PC-3 (cell line): ENCODE measurements at regions of chr6 and their contacts with region 1.

Region 1: DNA sequence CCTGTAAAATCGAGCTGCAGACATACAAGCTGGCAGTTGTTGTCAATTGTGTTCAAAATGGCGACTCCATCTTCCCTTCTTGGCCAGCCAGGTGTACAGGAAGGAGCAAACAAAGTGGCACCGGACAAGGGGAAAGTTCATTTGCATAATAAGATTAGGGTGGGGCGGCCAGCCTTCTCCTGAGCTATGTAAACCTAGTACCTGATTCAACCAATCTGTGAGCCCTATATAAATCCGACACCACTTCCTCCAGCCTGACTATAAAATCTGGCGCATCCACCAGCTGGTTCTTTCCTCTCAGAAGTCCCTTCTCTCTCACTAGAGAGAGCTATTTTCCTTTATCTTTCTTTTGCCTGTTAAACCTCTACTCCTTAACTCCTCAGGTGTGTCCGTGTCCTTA is 8.1 kb upstream of the HBS1L start:
- DNase-seq: peak; percentile 77
- ATAC-seq: peak; percentile 91
- H3K4me3 ChIP-seq: no peak overlapping the region
- H3K27ac ChIP-seq: no peak overlapping the region
- H3K4me1 ChIP-seq: peaks cover 14% of the 10 kb centered on the region; the same call in 1 of the 2 replicates
- H3K27me3 ChIP-seq: no peaks in the 10 kb centered on the region
- CTCF ChIP-seq: peak; percentile 49

Region 2: GRCh38 chr6:135183532-135184440 is 121.1 kb after region 1 on chr6:
- CTCF ChIA-PET with region 1: interaction called, 11 read pairs
- POLR2A ChIA-PET with region 1: no interaction called
- intact Hi-C with region 1: no loop called
- DNase-seq: peak; percentile 77
- ATAC-seq: peak; percentile 51
- H3K4me3 ChIP-seq: peak overlapping the region; percentile 78
- H3K27ac ChIP-seq: no peak overlapping the region
- H3K4me1 ChIP-seq: no peaks in the 10 kb centered on the region
- H3K27me3 ChIP-seq: no peaks in the 10 kb centered on the region
- CTCF ChIP-seq: peak; percentile 73

Region 3: DNA sequence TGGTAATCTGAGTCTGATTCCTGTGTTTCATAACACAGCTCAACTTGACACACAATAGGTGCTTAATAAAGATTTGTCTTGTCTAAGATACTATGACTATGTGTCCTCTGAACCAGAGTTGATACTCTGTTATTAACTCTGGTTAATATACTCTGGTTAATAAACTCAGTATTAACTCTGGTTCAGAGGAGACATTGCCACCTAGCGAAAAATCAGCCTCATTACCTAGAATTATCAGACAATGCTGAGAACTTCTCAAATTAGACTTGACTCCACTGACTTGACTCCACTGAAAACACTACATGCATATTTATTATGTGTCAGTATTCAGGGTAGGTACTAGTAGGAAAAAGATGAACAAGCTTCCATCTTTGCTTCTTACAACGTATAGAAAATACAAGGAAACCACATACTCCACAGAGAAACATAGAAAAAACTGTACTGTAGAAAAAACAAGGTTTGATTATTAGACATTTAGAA is 361.0 kb after region 1 on chr6:
- CTCF ChIA-PET with region 1: interaction called, 3 read pairs
- POLR2A ChIA-PET with region 1: no interaction called
- intact Hi-C with region 1: loop called (anchors 10 kb)
- DNase-seq: peak; percentile 57
- ATAC-seq: peak; percentile 67
- H3K4me3 ChIP-seq: no peak overlapping the region
- H3K27ac ChIP-seq: no peak overlapping the region
- H3K4me1 ChIP-seq: no peaks in the 10 kb centered on the region
- H3K27me3 ChIP-seq: no peaks in the 10 kb centered on the region
- CTCF ChIP-seq: peak; percentile 74